ENCODE measurements at regions of chr1 and their contacts with region 1.

Region 1: DNA sequence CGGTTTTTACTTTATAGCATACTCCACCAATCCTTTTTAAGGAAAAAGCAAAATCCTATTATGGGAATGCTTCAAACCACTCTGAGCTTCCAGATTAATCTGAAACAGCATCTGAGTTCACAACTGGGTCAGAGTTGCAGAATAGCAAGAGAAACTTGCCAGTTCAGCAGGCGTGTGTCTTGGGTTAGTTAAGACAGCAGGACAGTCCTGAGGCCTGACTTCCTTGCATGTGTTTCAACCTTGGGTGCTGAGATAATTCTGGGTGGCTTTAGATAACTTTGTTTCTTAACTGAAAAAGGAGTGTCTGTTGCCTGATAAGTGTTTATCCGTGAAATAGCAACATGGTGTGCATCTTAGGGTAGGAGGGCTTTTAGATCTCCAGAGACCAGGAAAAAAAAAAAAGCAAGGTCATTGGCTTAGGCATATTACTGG is 169.2 kb downstream of the DHRS3 start:
- DNase-seq: peak; percentile 76 to 99 (median 85)
- ATAC-seq: peak; percentile 94
- H3K4me3 ChIP-seq: no peak overlapping the region
- H3K27ac ChIP-seq: peak overlapping the region; percentile 95
- H3K4me1 ChIP-seq: peaks cover 29 to 87% of the 10 kb centered on the region in 2 experiments
- H3K27me3 ChIP-seq: no peaks in the 10 kb centered on the region
- CTCF ChIP-seq: 0 out of 6 replicates have a peak, but pooled peaks of 1 of the 3 experiments have one; percentile 6
- EP300 ChIP-seq: peak; percentile 100
- POLR2A ChIP-seq: no peak
- RAD21 ChIP-seq: peak; percentile 33 to 52; a peak in 2 of 4 replicates

Region 2: DNA sequence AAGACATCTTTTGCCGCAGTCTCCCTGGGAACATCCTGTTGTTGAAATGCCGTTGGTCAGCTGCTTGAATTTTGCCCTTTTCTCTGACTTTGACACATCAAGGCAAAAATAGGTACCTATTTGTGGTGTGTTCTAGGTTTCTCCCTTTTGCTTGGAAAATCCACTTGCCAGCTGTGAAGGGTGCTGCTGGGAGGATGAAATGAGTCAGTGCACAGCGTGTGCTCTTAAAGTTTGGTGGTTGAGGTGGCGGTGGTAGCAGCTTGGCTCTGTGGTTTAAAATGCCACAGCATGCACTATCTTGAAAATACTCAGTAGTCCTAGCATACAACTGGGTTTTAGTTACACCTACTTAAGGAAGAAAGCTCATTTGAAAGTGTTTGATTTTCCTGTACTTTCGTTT is 14.6 kb before region 1 on chr1:
- CTCF ChIA-PET with region 1: no interaction called
- POLR2A ChIA-PET with region 1: interaction called, 14 read pairs
- in situ Hi-C with region 1: no loop called
- intact Hi-C with region 1: no loop called
- DNase-seq: peak in 2 of 4 experiments; percentile 36 to 74
- ATAC-seq: peak; percentile 46
- H3K4me3 ChIP-seq: no peak overlapping the region
- H3K27ac ChIP-seq: peak overlapping the region; percentile 70
- H3K4me1 ChIP-seq: peaks cover 28 to 70% of the 10 kb centered on the region in 2 experiments
- H3K27me3 ChIP-seq: no peaks in the 10 kb centered on the region
- CTCF ChIP-seq: no peak
- EP300 ChIP-seq: no peak
- POLR2A ChIP-seq: no peak
- RAD21 ChIP-seq: no peak